Colonic mucosa (tissue), 4 donors: ENCODE measurements at regions of chr1 and their contacts with region 1.

Region 1: DNA sequence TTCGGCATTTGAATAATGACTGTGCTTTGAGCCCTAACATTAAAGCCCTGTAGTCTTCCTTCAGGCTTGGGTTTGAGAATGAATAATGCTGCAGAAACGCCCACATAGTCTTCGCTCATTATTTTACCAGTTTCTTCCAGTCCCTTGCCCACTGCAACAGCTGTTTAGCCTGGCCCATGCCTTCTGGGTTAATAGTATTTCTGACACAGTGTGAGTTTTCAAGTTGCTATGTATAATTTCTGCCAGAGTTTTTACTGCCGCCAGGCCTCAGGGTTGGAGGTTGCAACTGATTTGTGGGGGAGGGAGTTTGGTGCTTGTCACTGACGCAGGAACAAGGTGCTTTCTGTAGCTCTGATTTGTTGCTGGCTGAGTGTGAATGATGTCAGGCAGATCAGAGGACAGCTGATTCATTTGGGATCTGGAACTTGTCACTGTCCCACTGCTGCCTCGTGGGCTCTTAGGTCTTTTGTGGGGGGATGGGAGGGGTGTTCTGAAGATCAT is 109.8 kb downstream of the MAST2 start:
- DNase-seq: peak; percentile 81
- H3K4me3 ChIP-seq: no peak overlapping the region
- H3K27ac ChIP-seq: peak overlapping the region; percentile 70
- H3K4me1 ChIP-seq: peaks cover 4% of the 10 kb centered on the region
- H3K27me3 ChIP-seq: no peaks in the 10 kb centered on the region
- CTCF ChIP-seq: no peak

Region 2: DNA sequence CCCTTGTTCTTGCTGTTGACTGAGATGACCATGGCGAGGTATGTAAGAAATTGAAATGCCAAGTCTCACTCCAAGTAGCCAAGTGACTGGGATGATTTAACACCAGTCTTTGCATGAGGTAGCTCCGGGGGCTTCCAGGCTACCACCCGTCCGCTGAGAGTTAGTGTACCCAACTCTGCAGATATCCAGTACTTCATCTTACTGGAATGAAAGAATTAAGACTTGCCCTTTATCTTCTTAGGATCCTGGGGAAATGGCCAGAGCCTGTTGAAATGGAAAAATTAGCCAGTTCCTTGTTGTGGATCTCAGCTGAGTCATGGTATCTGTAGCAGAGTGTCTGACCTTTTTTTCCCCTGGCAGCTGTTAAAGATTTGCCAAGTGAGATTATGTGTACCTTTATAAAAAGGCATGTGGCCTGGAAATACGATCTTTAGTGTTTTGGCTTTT is 41.2 kb after region 1 on chr1:
- intact Hi-C with region 1: no loop called
- DNase-seq: peak; percentile 37
- H3K4me3 ChIP-seq: no peak overlapping the region
- H3K27ac ChIP-seq: peak overlapping the region; percentile 66
- H3K4me1 ChIP-seq: no peaks in the 10 kb centered on the region
- H3K27me3 ChIP-seq: no peaks in the 10 kb centered on the region
- CTCF ChIP-seq: no peak

Region 3: DNA sequence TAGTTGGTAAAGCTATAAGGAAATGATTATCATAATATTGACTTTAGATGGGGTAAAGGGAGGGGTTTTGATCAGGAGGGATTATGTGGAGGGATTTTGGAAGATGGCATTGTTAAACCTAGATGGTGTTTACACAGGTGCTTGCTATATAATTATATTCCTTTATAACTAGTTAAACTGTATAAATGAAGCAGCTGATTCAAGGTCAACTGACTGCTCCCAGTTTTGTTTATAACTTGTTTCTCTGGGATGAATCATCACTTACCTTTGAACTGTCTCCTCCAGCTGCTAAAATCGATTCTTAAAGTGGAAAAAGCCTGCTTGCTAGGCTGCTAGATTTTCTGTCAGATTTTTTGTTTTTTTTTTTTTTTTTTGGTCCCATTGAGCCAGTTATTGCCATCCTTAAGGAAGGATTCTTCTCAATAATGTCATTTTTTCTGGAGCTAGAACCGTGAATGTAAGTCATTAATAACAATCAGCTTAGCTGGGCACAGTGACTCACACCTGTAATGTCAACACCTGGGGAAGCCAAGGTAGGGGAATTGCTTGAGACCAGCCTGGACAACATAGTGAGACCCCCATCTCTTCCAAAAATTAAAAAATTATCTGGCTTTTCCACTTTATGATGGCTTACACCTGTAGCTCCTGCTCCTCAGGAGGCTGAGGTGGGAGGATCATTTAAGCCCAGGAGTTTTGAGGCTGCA is 66.0 kb after region 1 on chr1:
- intact Hi-C with region 1: loop called (anchors 10 kb)
- DNase-seq: no peak
- H3K4me3 ChIP-seq: no peak overlapping the region
- H3K27ac ChIP-seq: peak overlapping the region; percentile 79
- H3K4me1 ChIP-seq: peaks cover under 1% of the 10 kb centered on the region
- H3K27me3 ChIP-seq: no peaks in the 10 kb centered on the region
- CTCF ChIP-seq: no peak